ENCODE measurements at regions of chr5 and their contacts with region 1.

Region 1: GRCh38 chr5:128782446-128782845 is 182.8 kb upstream of the SLC27A6 start:
- DNase-seq: peak; percentile 85
- H3K4me3 Mint-ChIP-seq: no peak overlapping the region
- H3K27ac Mint-ChIP-seq: no peak overlapping the region
- H3K4me1 Mint-ChIP-seq: peaks cover 17% of the 10 kb centered on the region
- H3K27me3 Mint-ChIP-seq: peaks cover 18% of the 10 kb centered on the region
- CTCF ChIP-seq: no peak

Region 2: GRCh38 chr5:128736553-128736952 is 45.9 kb before region 1 on chr5:
- CTCF ChIA-PET with region 1: no interaction called
- intact Hi-C with region 1: loop called (anchors 2 kb)
- DNase-seq: peak; percentile 60
- H3K4me3 Mint-ChIP-seq: no peak overlapping the region
- H3K27ac Mint-ChIP-seq: peak overlapping the region; percentile 77
- H3K4me1 Mint-ChIP-seq: peaks cover 14% of the 10 kb centered on the region
- H3K27me3 Mint-ChIP-seq: no peaks in the 10 kb centered on the region
- CTCF ChIP-seq: no peak